B cell (primary cell): ENCODE measurements at regions of chr2 and their contacts with region 1.

Region 1: DNA sequence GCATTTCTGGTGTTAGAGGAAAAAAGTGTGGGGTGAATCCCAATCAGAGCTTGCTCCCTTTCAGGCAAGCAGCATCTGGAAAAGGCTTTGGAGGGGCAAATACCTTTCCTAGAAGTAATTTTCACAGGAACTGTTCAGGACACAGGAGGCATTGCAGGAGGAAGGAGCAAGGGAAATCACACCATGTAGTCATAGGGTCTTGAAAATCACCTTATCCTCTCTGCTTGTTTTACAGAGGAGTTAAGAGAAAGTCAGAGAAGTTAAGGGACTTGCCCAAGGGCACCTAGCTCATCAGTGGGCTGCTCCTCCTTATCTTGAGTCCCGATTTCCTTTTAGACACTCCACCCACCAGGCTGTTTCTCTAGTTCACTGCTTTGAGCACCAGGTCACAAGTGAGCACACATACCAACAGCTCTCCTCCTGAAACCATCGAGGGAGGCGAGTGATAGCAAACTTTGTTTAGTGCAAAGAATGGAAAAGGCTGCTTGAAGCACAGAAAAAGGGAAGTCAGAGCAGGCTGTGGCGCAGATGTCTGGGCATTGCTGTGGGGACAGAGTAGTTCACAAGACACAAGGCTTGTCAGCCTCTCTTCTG is 89.2 kb upstream of the CXCR4 start:
- DNase-seq: peak; percentile 94
- ATAC-seq: peak; percentile 65
- H3K4me3 ChIP-seq: peak overlapping the region in 4 of 5 experiments; percentile 1 to 44 (median 26)
- H3K4me3 Mint-ChIP-seq: peak overlapping the region; percentile 84
- H3K27ac ChIP-seq: peak overlapping the region; percentile 98 to 99
- H3K27ac Mint-ChIP-seq: peak overlapping the region; percentile 99
- H3K4me1 ChIP-seq: peaks cover 70 to 74% of the 10 kb centered on the region in 2 donors
- H3K4me1 Mint-ChIP-seq: peaks cover 77% of the 10 kb centered on the region
- H3K27me3 ChIP-seq: no peaks in the 10 kb centered on the region
- H3K27me3 Mint-ChIP-seq: no peaks in the 10 kb centered on the region
- CTCF ChIP-seq: no peak

Region 2: DNA sequence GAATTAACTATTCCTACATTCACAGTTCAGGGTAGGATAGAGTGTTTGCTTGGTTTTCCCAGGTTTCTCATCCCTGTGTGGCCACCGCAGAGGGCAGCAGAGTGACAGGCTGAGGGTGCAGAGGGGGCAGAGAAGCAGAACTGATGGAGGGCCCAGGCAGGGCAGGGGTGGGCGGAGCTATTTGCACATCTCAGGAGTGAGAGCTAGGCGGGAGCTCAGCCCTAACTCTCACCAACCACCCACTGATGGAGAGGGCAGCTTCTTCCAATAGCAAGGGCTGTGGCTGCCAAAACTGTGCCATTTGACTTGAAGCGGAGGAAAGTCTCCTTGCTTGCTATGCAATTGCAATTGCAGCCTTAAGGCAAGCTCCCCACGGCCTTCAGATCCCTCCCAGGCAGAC is 209.7 kb before region 1 on chr2:
- CTCF ChIA-PET with region 1: interaction called, 13 read pairs
- POLR2A ChIA-PET with region 1: interaction called, 6 read pairs
- intact Hi-C with region 1: no loop called
- DNase-seq: peak; percentile 83
- ATAC-seq: peak; percentile 95
- H3K4me3 ChIP-seq: peak overlapping the region in 3 of 5 experiments; percentile 8 to 17 (median 10)
- H3K4me3 Mint-ChIP-seq: peak overlapping the region; percentile 74
- H3K27ac ChIP-seq: peak overlapping the region; percentile 47 to 50
- H3K27ac Mint-ChIP-seq: peak overlapping the region; percentile 79
- H3K4me1 ChIP-seq: peaks cover 52 to 57% of the 10 kb centered on the region in 2 donors
- H3K4me1 Mint-ChIP-seq: peaks cover 51% of the 10 kb centered on the region
- H3K27me3 ChIP-seq: no peaks in the 10 kb centered on the region
- H3K27me3 Mint-ChIP-seq: no peaks in the 10 kb centered on the region
- CTCF ChIP-seq: peak; percentile 26

Region 3: DNA sequence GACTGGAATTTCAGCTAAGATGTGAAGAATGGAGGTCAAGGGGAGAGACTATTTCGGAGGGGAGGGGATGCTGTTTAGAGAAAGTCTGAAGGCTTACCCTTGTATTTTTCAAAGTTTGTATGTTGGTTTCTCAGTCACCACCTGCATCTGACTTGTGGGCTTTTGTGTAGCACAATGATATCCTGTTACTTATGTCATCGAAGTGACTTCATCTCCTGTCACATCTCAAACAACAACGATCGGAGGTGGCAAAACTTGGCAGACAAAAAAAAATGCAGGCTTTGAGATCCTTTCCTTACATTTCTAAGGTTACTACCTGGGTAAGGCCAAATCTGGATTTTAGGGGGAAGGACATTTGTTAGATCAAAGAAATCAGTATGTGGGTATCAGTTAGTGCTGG is 77.5 kb before region 1 on chr2:
- CTCF ChIA-PET with region 1: interaction called, 55 read pairs
- POLR2A ChIA-PET with region 1: interaction called, 218 read pairs
- intact Hi-C with region 1: loop called (anchors 1 kb)
- DNase-seq: peak; percentile 73
- ATAC-seq: peak; percentile 2
- H3K4me3 ChIP-seq: peak overlapping the region in 2 of 5 experiments; percentile 4 to 11
- H3K4me3 Mint-ChIP-seq: peak overlapping the region; percentile 83
- H3K27ac ChIP-seq: peak overlapping the region; percentile 98 to 99
- H3K27ac Mint-ChIP-seq: peak overlapping the region; percentile 96
- H3K4me1 ChIP-seq: peaks cover 96 to 98% of the 10 kb centered on the region in 2 donors
- H3K4me1 Mint-ChIP-seq: peaks cover 94% of the 10 kb centered on the region
- H3K27me3 ChIP-seq: no peaks in the 10 kb centered on the region
- H3K27me3 Mint-ChIP-seq: no peaks in the 10 kb centered on the region
- CTCF ChIP-seq: no peak

Region 4: GRCh38 chr2:136225950-136226835 is 19.1 kb after region 1 on chr2:
- CTCF ChIA-PET with region 1: interaction called, 28 read pairs
- POLR2A ChIA-PET with region 1: interaction called, 41 read pairs
- intact Hi-C with region 1: loop called (anchors 1 kb)
- DNase-seq: peak; percentile 88
- ATAC-seq: peak; percentile 84
- H3K4me3 ChIP-seq: no peak overlapping the region
- H3K4me3 Mint-ChIP-seq: peak overlapping the region; percentile 42
- H3K27ac ChIP-seq: peak overlapping the region; percentile 62 to 75
- H3K27ac Mint-ChIP-seq: peak overlapping the region; percentile 95
- H3K4me1 ChIP-seq: peaks cover 46 to 54% of the 10 kb centered on the region in 2 donors
- H3K4me1 Mint-ChIP-seq: peaks cover 75% of the 10 kb centered on the region
- H3K27me3 ChIP-seq: no peaks in the 10 kb centered on the region
- H3K27me3 Mint-ChIP-seq: no peaks in the 10 kb centered on the region
- CTCF ChIP-seq: no peak